ENCODE measurements at regions of chr9 and their contacts with region 1.

Region 1: GRCh38 chr9:77977210-77977611 is 54.4 kb downstream of the GNAQ start:
- DNase-seq: peak in 9 of 10 donors; percentile 46 to 75 (median 66)
- H3K4me3 ChIP-seq: peak overlapping the region in 9 of 59 donors; percentile 1 to 38 (median 23)
- H3K27ac ChIP-seq: peak overlapping the region in 58 of 59 donors; percentile 26 to 89 (median 78)
- H3K27me3 ChIP-seq: no peaks in the 10 kb centered on the region
- CTCF ChIP-seq: peak; percentile 34 to 83 (median 68)

Region 2: GRCh38 chr9:77793904-77794303 is 183.3 kb before region 1 on chr9:
- intact Hi-C with region 1: no loop called
- DNase-seq: peak in 1 of 10 donors; percentile 26
- H3K4me3 ChIP-seq: peak overlapping the region in 27 of 59 donors; percentile 4 to 49 (median 14)
- H3K27ac ChIP-seq: peak overlapping the region; percentile 48 to 96 (median 88)
- H3K27me3 ChIP-seq: no peaks in the 10 kb centered on the region
- CTCF ChIP-seq: peak in 39 of 56 donors; percentile 11 to 59 (median 36)

Region 3: DNA sequence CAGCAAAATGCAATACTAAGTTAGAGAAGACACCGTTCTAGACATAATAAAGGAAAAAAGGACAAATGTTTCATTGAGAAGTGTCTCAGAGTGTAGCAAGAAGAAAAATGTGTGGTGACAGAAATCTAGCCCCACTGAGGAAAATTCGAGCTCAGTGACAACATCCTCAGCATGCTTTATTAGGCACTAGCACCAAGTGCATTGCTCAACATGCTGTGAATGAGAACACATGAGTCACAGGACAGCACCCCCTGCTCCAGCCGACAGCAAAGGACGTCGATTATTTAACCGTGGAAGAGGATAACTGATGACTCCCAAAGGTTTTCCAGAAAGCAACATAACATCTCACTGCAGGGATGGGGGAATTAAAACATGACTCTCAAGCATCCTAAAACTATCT is 128.3 kb before region 1 on chr9:
- intact Hi-C with region 1: loop called in 1 of 2 experiments (anchors 5 kb)
- DNase-seq: peak in 6 of 10 donors; percentile 43 to 77 (median 64)
- H3K4me3 ChIP-seq: no peak overlapping the region
- H3K27ac ChIP-seq: peak overlapping the region in 58 of 59 donors; percentile 1 to 91 (median 72)
- H3K27me3 ChIP-seq: no peaks in the 10 kb centered on the region
- CTCF ChIP-seq: peak in 2 of 56 donors; percentile 8 to 11

Region 4: GRCh38 chr9:77916410-77916819 is 60.8 kb before region 1 on chr9:
- intact Hi-C with region 1: loop called in 1 of 2 experiments (anchors 10 kb)
- DNase-seq: no peak
- H3K4me3 ChIP-seq: no peak overlapping the region
- H3K27ac ChIP-seq: peak overlapping the region in 4 of 59 donors; percentile 12 to 31 (median 13)
- H3K27me3 ChIP-seq: no peaks in the 10 kb centered on the region
- CTCF ChIP-seq: no peak

Region 5: GRCh38 chr9:78023003-78023741 is 46.0 kb after region 1 on chr9:
- intact Hi-C with region 1: loop called in 1 of 2 experiments (anchors 2 kb)
- DNase-seq: no peak
- H3K4me3 ChIP-seq: peak overlapping the region in 28 of 59 donors; percentile 1 to 46 (median 24)
- H3K27ac ChIP-seq: peak overlapping the region in 43 of 59 donors; percentile 5 to 98 (median 48)
- H3K27me3 ChIP-seq: no peaks in the 10 kb centered on the region
- CTCF ChIP-seq: no peak

Region 6: DNA sequence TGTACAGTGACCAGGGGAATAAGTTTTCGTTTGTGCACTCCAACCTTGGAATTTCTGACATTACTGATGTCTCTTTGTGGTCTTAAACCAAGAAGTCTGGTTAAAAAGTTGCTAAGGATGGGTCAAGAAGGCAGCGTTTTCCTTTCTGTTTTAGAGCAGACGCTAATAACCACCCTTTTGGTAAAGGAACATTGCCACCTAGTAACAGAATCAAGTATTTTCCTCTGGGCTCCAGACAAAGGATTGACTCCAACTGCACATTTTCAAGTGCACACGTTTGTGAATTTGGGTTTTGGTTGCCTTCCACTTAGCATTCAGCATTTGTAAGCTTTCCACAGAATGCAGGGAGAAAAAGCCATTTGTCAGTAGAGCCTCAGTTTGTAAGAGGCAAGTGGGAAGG is 236.5 kb after region 1 on chr9:
- intact Hi-C with region 1: loop called (anchors 5 to 10 kb)
- DNase-seq: no peak
- H3K4me3 ChIP-seq: peak overlapping the region in 8 of 59 donors; percentile 12 to 41 (median 17)
- H3K27ac ChIP-seq: peak overlapping the region in 56 of 59 donors; percentile 6 to 86 (median 70)
- H3K27me3 ChIP-seq: no peaks in the 10 kb centered on the region
- CTCF ChIP-seq: peak in 53 of 56 donors; percentile 29 to 78 (median 58)

Region 7: GRCh38 chr9:78280982-78281668 is 303.9 kb after region 1 on chr9:
- intact Hi-C with region 1: no loop called
- DNase-seq: no peak
- H3K4me3 ChIP-seq: no peak overlapping the region
- H3K27ac ChIP-seq: peak overlapping the region in 2 of 59 donors; percentile 43 to 59
- H3K27me3 ChIP-seq: no peaks in the 10 kb centered on the region
- CTCF ChIP-seq: no peak